Activated CD4-positive, alpha-beta T cell treated with anti-CD3 and anti-CD28 coated beads for 36 hours (primary cell): ENCODE measurements at regions of chr17 and their contacts with region 1.

Region 1: DNA sequence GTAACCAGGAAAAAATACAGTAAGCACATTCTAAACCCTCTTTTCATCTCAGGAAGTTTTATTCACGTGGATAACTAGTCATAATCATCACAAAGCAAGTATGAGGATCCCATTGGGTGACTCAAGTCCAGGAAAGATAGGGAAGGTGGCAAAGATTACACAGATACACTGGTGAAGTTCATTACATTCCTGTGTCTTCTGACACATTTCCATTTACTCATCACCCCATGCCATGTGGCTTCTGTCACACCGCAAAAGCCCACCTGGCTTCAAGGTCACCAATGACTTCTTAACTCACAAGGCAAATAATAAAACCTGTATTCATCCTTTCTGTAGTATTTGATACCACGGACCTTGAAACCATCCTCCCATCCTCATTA is 17.0 kb downstream of the HS3ST3A1 start:
- DNase-seq: no peak
- ATAC-seq: no peak
- H3K4me3 Mint-ChIP-seq: no peak overlapping the region
- H3K27ac Mint-ChIP-seq: no peak overlapping the region
- H3K4me1 Mint-ChIP-seq: no peaks in the 10 kb centered on the region
- H3K27me3 Mint-ChIP-seq: peaks cover 6% of the 10 kb centered on the region

Region 2: GRCh38 chr17:15213381-15214087 is 1628.8 kb after region 1 on chr17:
- CTCF ChIA-PET with region 1: no interaction called
- POLR2A ChIA-PET with region 1: no interaction called
- intact Hi-C with region 1: loop called in 1 of 2 experiments (anchors 10 kb)
- DNase-seq: peak; percentile 14
- ATAC-seq: no peak
- H3K4me3 Mint-ChIP-seq: no peak overlapping the region
- H3K27ac Mint-ChIP-seq: no peak overlapping the region
- H3K4me1 Mint-ChIP-seq: no peaks in the 10 kb centered on the region
- H3K27me3 Mint-ChIP-seq: peaks cover 9% of the 10 kb centered on the region